Heart left ventricle (tissue), 16 donors: ENCODE measurements at regions of chr11 and their contacts with region 1.

Region 1: DNA sequence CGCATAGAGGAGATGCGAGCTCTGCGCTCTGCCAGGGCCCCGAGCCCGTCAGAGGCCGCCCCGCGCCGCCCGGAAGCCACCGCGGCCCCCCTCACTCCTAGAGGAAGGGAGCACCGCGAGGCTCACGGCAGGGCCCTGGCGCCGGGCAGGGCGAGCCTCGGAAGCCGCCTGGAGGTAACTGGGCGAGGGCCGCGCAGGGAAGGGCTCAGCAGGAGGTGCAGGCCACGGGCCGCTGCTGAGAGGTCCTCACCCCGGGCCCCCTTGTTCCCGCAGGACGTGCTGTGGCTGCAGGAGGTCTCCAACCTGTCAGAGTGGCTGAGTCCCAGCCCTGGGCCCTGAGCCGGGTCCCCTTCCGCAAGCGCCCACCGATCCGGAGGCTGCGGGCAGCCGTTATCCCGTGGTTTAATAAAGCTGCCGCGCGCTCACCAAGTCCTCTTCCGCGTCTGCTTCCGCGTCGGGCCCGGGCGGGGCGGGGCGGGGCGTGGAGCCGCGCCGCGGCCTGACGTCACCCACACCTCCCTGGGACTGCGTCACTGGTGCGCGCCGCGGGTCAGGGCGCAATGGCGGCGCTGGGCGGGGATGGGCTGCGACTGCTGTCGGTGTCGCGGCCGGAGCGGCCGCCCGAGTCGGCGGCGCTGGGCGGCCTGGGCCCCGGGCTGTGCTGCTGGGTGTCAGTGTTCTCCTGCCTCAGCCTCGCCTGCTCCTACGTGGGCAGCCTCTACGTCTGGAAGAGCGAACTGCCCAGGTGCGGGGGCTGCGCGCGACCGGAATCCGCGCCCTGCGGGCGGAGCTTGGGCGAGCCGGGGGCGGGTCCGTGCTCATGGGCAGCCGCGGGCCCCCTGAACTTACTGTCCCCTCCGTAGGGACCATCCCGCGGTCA is at the start of gene RCE1:
- DNase-seq: peak; percentile 88 to 95 (median 93)
- ATAC-seq: peak; percentile 86 to 98 (median 96)
- H3K4me3 ChIP-seq: peak within 1 kb of the TSS; percentile 81 to 100 (median 92)
- H3K27ac ChIP-seq: peak within 1 kb of the TSS; percentile 94 to 100 (median 96)
- H3K4me1 ChIP-seq: peaks cover 7 to 35% (median 24%) of the 10 kb centered on the region in 12 donors
- H3K27me3 ChIP-seq: no peaks in the 10 kb centered on the region
- CTCF ChIP-seq: no peak
- POLR2A ChIP-seq: peak; percentile 10 to 90
- total RNA-seq, gene RCE1: 3.1 to 9.5 (median 5.0) TPM

Region 2: DNA sequence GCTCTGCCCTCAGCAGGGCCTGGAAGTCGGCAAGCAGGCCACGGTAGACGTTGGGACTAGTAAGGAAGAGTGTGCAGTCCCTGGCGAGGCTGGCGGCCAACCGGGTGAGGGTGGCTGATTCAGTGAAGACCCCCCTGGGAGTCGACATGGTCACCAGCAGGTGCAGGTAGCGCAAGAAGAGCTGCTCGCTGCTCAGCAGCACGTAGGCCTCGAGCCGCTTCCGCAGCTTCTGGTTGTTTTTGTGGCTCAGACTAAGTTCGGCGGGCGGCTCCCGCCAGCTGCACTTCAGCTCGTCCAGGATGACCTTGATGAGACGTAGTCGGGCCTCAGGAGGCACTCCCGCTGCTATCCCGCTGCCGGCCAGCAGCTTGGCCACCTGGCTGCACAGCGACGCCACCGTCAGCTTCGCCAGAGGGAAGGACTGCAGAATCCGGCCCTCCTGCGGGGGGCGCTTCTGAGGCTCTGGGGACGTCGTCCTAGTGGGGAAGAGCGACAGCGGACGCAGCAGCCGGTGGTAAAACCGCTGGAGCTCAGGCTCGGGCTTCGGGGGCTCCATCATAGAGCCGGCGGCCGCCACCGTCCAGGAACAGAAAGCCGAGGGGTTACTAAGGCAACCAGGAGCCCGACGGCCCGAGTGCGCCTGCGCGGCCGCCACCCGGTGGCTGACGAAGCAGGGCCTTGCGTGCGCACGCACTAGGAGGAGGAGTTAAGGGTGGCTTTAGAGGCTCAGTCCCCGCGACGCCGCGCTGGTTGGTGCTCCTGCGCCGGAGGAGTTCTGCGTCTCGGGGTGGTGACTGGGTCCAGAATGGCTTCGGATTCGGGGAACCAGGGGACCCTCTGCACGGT is 250.5 kb before region 1 on chr11 and contains the starts of genes CCDC87 and CCS:
- intact Hi-C with region 1: loop called in 2 of 10 experiments (anchors 10 kb)
- DNase-seq: peak; percentile 97 to 100 (median 98)
- ATAC-seq: peak; percentile 97 to 99 (median 98)
- H3K4me3 ChIP-seq: peak within 1 kb of the TSS; percentile 42 to 80 (median 68)
- H3K27ac ChIP-seq: peak within 1 kb of the TSS; percentile 24 to 91 (median 80)
- H3K4me1 ChIP-seq: peaks cover 2 to 38% (median 28%) of the 10 kb centered on the region in 12 donors
- H3K27me3 ChIP-seq: no peaks in the 10 kb centered on the region
- CTCF ChIP-seq: peak; percentile 48 to 86 (median 64)
- POLR2A ChIP-seq: peak; percentile 28 to 97
- total RNA-seq, gene CCDC87: 0.14 to 0.63 (median 0.36) TPM
- total RNA-seq, gene CCS: 13.9 to 26.7 (median 19.1) TPM

Region 3: DNA sequence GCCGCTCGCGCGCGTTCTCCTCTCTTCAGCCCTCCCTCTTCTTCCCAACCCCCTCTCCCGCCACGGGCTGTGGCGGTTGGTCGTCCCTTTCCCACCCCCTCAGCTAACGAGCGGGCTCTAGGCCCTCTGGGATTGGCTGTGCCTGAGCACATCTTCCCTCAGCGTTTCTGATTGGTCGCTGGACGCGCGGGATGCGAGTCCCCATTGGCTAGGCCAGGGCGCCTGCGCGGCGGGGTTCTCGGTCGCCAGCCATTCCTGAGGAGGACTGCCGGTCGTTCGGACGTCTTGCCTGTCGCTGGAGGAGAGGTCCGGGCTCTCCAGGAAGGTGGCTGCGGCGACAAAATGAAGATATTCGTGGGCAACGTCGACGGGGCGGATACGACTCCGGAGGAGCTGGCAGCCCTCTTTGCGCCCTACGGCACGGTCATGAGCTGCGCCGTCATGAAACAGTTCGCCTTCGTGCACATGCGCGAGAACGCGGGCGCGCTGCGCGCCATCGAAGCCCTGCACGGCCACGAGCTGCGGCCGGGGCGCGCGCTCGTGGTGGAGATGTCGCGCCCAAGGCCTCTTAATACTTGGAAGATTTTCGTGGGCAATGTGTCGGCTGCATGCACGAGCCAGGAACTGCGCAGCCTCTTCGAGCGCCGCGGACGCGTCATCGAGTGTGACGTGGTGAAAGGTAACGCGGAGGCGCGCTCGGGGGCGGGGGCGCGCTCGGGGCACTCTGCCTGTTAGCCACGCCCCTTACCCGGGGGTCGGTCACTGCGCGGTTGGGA is 226.6 kb before region 1 on chr11 and contains the start of gene RBM14:
- intact Hi-C with region 1: no loop called
- DNase-seq: peak; percentile 99 to 100 (median 99)
- ATAC-seq: peak; percentile 95 to 98 (median 98)
- H3K4me3 ChIP-seq: peak within 1 kb of the TSS; percentile 75 to 98 (median 86)
- H3K27ac ChIP-seq: peak within 1 kb of the TSS; percentile 62 to 98 (median 93)
- H3K4me1 ChIP-seq: peaks cover 2 to 49% (median 37%) of the 10 kb centered on the region in 12 donors
- H3K27me3 ChIP-seq: no peaks in the 10 kb centered on the region
- CTCF ChIP-seq: no peak
- POLR2A ChIP-seq: peak; percentile 45 to 97
- total RNA-seq, gene RBM14: 20.3 to 40.0 (median 30.6) TPM